CD4-positive, alpha-beta memory T cell (primary cell): ENCODE measurements at regions of chr3 and their contacts with region 1.

Region 1: DNA sequence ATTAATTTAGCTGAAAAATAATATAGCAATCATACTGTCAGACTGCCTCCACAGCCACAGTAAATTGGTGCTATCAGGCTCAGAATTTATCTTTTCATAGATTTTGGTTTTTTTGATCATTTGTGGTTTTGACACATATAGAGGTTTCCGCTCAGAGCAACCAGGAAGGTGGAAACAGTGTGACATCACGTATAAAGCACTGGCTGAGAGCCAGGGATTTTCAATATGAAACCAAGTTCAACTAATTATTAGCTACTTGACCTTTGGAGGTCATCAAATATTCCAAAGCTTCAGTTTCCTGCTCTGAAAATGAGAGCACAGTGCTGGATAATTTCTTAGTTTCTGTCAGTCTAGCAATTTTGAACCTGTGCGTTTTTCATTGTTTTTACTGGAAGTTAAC is 433.8 kb upstream of the SUCLG2 start:
- DNase-seq: peak; percentile 76 to 83 (median 79)
- H3K4me3 ChIP-seq: no peak overlapping the region
- H3K4me3 Mint-ChIP-seq: peak overlapping the region in 7 of 8 donors; percentile 29 to 79 (median 64)
- H3K27ac ChIP-seq: no peak overlapping the region
- H3K27ac Mint-ChIP-seq: peak overlapping the region; percentile 64 to 92 (median 86)
- H3K4me1 ChIP-seq: peaks cover 62% of the 10 kb centered on the region
- H3K4me1 Mint-ChIP-seq: peaks cover 50 to 92% (median 69%) of the 10 kb centered on the region in 4 donors
- H3K27me3 ChIP-seq: no peaks in the 10 kb centered on the region
- H3K27me3 Mint-ChIP-seq: no peaks in the 10 kb centered on the region

Region 2: GRCh38 chr3:67947808-67948508 is 140.3 kb before region 1 on chr3:
- CTCF ChIA-PET with region 1: interaction called, 4 read pairs
- POLR2A ChIA-PET with region 1: interaction called, 4 read pairs
- intact Hi-C with region 1: loop called (anchors 10 kb)
- DNase-seq: peak; percentile 75 to 86 (median 82)
- H3K4me3 ChIP-seq: peak overlapping the region; percentile 24 to 51
- H3K4me3 Mint-ChIP-seq: peak overlapping the region; percentile 81 to 95 (median 84)
- H3K27ac ChIP-seq: no peak overlapping the region
- H3K27ac Mint-ChIP-seq: peak overlapping the region; percentile 59 to 95 (median 86)
- H3K4me1 ChIP-seq: peaks cover 27% of the 10 kb centered on the region
- H3K4me1 Mint-ChIP-seq: peaks cover 21 to 46% (median 29%) of the 10 kb centered on the region in 4 donors
- H3K27me3 ChIP-seq: no peaks in the 10 kb centered on the region
- H3K27me3 Mint-ChIP-seq: no peaks in the 10 kb centered on the region

Region 3: DNA sequence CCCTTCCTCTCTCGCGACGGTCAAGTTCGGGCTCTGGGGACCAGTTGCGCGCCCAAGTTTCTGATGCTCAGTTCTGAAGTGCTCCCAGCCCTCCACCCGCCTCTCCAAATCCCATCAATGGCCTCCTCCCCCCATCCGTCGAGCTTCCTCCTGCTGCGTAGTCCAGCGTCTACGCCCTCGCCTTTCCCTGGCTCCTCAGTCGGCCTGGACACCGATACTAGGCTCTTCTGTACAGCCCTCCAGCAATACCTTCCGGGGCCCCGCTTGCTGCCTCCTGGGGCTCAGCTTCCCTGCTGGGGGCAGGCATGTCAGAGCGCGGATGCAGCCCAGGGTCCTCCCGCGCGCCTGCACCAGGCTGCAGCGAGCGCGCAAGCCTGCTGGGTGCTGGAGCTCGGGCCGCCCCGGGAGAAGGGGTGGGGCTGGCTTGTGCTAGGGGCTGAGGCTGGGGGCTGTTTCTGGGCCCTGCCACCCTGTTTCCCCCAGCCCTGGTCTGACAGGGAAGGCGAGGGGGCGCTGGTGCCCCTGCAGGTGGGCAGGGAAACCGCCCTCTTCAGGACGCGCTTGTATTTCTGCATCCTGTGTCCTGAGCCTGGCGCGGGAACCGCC is 80.5 kb before region 1 on chr3:
- CTCF ChIA-PET with region 1: no interaction called
- POLR2A ChIA-PET with region 1: no interaction called
- intact Hi-C with region 1: loop called (anchors 5 kb)
- DNase-seq: peak; percentile 33 to 39 (median 38)
- H3K4me3 ChIP-seq: peak overlapping the region; percentile 9 to 33
- H3K4me3 Mint-ChIP-seq: peak overlapping the region; percentile 72 to 95 (median 87)
- H3K27ac ChIP-seq: no peak overlapping the region
- H3K27ac Mint-ChIP-seq: peak overlapping the region in 3 of 7 donors; percentile 44 to 75 (median 69)
- H3K4me1 ChIP-seq: no peaks in the 10 kb centered on the region
- H3K4me1 Mint-ChIP-seq: peaks cover 9 to 28% (median 15%) of the 10 kb centered on the region in 4 donors
- H3K27me3 ChIP-seq: peaks cover 9% of the 10 kb centered on the region
- H3K27me3 Mint-ChIP-seq: peaks cover 10 to 12% of the 10 kb centered on the region in 2 donors

Region 4: GRCh38 chr3:68186733-68187132 is 98.5 kb after region 1 on chr3:
- CTCF ChIA-PET with region 1: no interaction called
- POLR2A ChIA-PET with region 1: no interaction called
- intact Hi-C with region 1: no loop called
- DNase-seq: no peak
- H3K4me3 ChIP-seq: no peak overlapping the region
- H3K4me3 Mint-ChIP-seq: no peak overlapping the region
- H3K27ac ChIP-seq: no peak overlapping the region
- H3K27ac Mint-ChIP-seq: peak overlapping the region in 1 of 7 donors; percentile 19
- H3K4me1 ChIP-seq: no peaks in the 10 kb centered on the region
- H3K4me1 Mint-ChIP-seq: no peaks in the 10 kb centered on the region
- H3K27me3 ChIP-seq: no peaks in the 10 kb centered on the region
- H3K27me3 Mint-ChIP-seq: no peaks in the 10 kb centered on the region